Vagina (tissue), 2 donors: ENCODE measurements at regions of chrX and their contacts with region 1.

Region 1: DNA sequence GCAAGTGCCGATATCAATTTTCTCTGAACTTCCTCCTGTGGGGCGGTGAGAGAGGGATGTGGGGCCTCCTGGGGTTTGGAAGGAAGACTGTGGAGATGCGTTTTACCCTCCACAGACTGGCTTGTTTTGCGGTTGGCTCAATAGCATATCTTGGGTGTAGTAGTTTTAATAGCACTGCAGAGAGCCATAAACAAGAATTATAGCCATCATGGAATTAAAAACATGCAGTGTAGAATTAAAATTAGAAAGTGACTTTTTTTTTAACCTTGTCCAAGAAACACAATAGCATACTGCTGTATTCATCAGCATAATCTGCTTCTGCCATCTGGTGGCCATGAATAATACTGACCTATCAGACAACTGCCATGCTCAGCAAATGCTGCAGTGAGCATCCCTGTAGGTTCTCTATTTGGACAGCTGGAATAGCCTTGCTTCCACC is 47.3 kb upstream of the SCML1 start:
- DNase-seq: no peak
- H3K4me3 ChIP-seq: no peak overlapping the region
- H3K27ac ChIP-seq: no peak overlapping the region
- H3K4me1 ChIP-seq: no peaks in the 10 kb centered on the region
- H3K27me3 ChIP-seq: no peaks in the 10 kb centered on the region
- CTCF ChIP-seq: peak; percentile 51 to 68 (median 61)
- POLR2A ChIP-seq: no peak

Region 2: DNA sequence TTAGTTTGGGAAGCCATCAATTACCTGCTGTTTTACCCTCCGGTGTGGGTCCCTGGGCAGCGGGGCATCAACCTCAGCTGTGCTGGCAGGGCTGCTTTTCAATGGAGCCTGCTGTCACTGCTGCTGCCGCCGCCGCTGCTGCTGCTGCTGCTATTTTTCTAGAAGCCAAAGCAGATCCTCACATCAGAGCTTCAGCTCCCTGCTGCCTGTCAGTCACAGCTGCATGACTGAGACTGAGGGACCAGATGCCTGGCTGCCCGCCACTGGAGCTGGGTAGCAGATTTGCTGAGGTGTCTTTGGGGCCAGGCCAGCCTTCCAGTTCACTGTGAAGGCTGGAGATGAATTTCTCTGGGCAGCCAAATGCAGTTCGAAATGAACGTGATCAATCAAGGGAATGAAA is 515.3 kb before region 1 on chrX:
- intact Hi-C with region 1: no loop called
- DNase-seq: no peak
- H3K4me3 ChIP-seq: no peak overlapping the region
- H3K27ac ChIP-seq: no peak overlapping the region
- H3K4me1 ChIP-seq: no peaks in the 10 kb centered on the region
- H3K27me3 ChIP-seq: no peaks in the 10 kb centered on the region
- CTCF ChIP-seq: no peak
- POLR2A ChIP-seq: no peak

Region 3: GRCh38 chrX:17242470-17242869 is 447.5 kb before region 1 on chrX:
- intact Hi-C with region 1: loop called (anchors 10 kb)
- DNase-seq: no peak
- H3K4me3 ChIP-seq: no peak overlapping the region
- H3K27ac ChIP-seq: no peak overlapping the region
- H3K4me1 ChIP-seq: no peaks in the 10 kb centered on the region
- H3K27me3 ChIP-seq: no peaks in the 10 kb centered on the region
- CTCF ChIP-seq: peak; percentile 35 to 69 (median 48)
- POLR2A ChIP-seq: no peak

Region 4: GRCh38 chrX:17869580-17869979 is 179.6 kb after region 1 on chrX:
- intact Hi-C with region 1: no loop called
- DNase-seq: no peak
- H3K4me3 ChIP-seq: no peak overlapping the region
- H3K27ac ChIP-seq: no peak overlapping the region
- H3K4me1 ChIP-seq: no peaks in the 10 kb centered on the region
- H3K27me3 ChIP-seq: no peaks in the 10 kb centered on the region
- CTCF ChIP-seq: no peak
- POLR2A ChIP-seq: no peak

Region 5: GRCh38 chrX:18596096-18596495 is 906.1 kb after region 1 on chrX:
- intact Hi-C with region 1: no loop called
- DNase-seq: no peak
- H3K4me3 ChIP-seq: no peak overlapping the region
- H3K27ac ChIP-seq: no peak overlapping the region
- H3K4me1 ChIP-seq: no peaks in the 10 kb centered on the region
- H3K27me3 ChIP-seq: no peaks in the 10 kb centered on the region
- CTCF ChIP-seq: no peak
- POLR2A ChIP-seq: no peak